ENCODE measurements at regions of chr3 and their contacts with region 1.

Region 1: GRCh38 chr3:132730891-132731580 is 8.8 kb upstream of the NPHP3 start:
- DNase-seq: peak; percentile 46
- H3K4me3 ChIP-seq: no peak overlapping the region; a peak in 1 of 4 replicates
- H3K27ac ChIP-seq: no peak overlapping the region; a peak in 1 of 4 replicates
- H3K4me1 ChIP-seq: no peaks in the 10 kb centered on the region; a peak in 1 of 4 replicates
- H3K27me3 ChIP-seq: no peaks in the 10 kb centered on the region
- CTCF ChIP-seq: peak; percentile 68
- EP300 ChIP-seq: no peak
- RAD21 ChIP-seq: peak; percentile 96

Region 2: GRCh38 chr3:132236701-132237651 is 494.1 kb before region 1 on chr3:
- CTCF ChIA-PET with region 1: no interaction called
- POLR2A ChIA-PET with region 1: no interaction called
- DNase-seq: no peak
- H3K4me3 ChIP-seq: no peak overlapping the region
- H3K27ac ChIP-seq: no peak overlapping the region
- H3K4me1 ChIP-seq: no peaks in the 10 kb centered on the region
- H3K27me3 ChIP-seq: no peaks in the 10 kb centered on the region; the same call in 1 of the 2 replicates
- CTCF ChIP-seq: no peak
- EP300 ChIP-seq: no peak
- RAD21 ChIP-seq: no peak

Region 3: GRCh38 chr3:133264920-133265319 is 533.9 kb after region 1 on chr3:
- CTCF ChIA-PET with region 1: interaction called, 11 read pairs
- POLR2A ChIA-PET with region 1: no interaction called
- DNase-seq: peak; percentile 35
- H3K4me3 ChIP-seq: no peak overlapping the region
- H3K27ac ChIP-seq: peak overlapping the region; percentile 58 to 97; a peak in 3 of 4 replicates
- H3K4me1 ChIP-seq: peaks cover 4 to 53% of the 10 kb centered on the region in 2 experiments; a peak in 2 of 4 replicates
- H3K27me3 ChIP-seq: no peaks in the 10 kb centered on the region
- CTCF ChIP-seq: no peak
- EP300 ChIP-seq: peak; percentile 79 to 92
- RAD21 ChIP-seq: 0 out of 2 replicates have a peak, but pooled peaks have one; percentile 3

Region 4: GRCh38 chr3:133401374-133402135 is 670.5 kb after region 1 on chr3:
- CTCF ChIA-PET with region 1: interaction called, 15 read pairs
- POLR2A ChIA-PET with region 1: no interaction called
- DNase-seq: peak; percentile 77
- H3K4me3 ChIP-seq: no peak overlapping the region
- H3K27ac ChIP-seq: peak overlapping the region in 1 of 2 experiments; percentile 64; a peak in 2 of 4 replicates
- H3K4me1 ChIP-seq: peaks cover 0 to 22% of the 10 kb centered on the region in 2 experiments; a peak in 2 of 4 replicates
- H3K27me3 ChIP-seq: no peaks in the 10 kb centered on the region
- CTCF ChIP-seq: no peak
- EP300 ChIP-seq: no peak
- RAD21 ChIP-seq: no peak

Region 5: GRCh38 chr3:133426721-133427120 is 695.7 kb after region 1 on chr3:
- CTCF ChIA-PET with region 1: interaction called, 55 read pairs
- POLR2A ChIA-PET with region 1: no interaction called
- DNase-seq: no peak
- H3K4me3 ChIP-seq: no peak overlapping the region
- H3K27ac ChIP-seq: no peak overlapping the region
- H3K4me1 ChIP-seq: peaks cover 3 to 12% of the 10 kb centered on the region in 2 experiments; a peak in 2 of 4 replicates
- H3K27me3 ChIP-seq: no peaks in the 10 kb centered on the region
- CTCF ChIP-seq: no peak
- EP300 ChIP-seq: no peak
- RAD21 ChIP-seq: no peak

Region 6: DNA sequence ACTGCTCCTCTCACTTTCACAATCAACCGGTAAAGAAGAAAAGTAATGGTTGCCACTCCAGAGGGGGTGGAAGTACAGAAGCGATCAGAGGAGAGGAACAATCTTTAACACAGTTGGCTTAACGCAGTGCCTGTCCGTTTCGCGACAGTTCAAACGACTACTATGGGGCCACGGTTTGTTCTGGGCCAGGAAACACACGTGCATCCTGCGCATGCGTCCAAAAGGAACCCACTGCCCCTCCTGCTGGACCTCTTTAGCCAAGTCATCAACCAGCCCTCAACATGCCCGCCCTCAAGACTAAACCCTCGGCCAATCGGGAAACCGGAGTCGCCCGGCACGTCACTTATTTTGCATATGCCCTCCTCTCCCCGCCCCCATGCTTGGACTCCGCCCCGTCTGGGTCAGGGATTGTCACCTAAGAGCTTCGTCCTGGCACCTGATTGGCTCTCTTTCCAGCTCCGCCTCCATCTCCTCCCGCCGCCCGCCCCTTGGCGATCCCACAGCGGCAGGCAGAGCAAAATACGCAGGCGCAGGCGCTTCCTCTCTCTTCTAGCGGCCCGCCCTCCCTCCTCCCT is 842.1 kb after region 1 on chr3:
- CTCF ChIA-PET with region 1: interaction called, 20 read pairs
- POLR2A ChIA-PET with region 1: interaction called, 3 read pairs
- DNase-seq: peak; percentile 90
- H3K4me3 ChIP-seq: peak overlapping the region; percentile 60 to 83
- H3K27ac ChIP-seq: peak overlapping the region; percentile 81 to 94
- H3K4me1 ChIP-seq: peaks cover 15 to 43% of the 10 kb centered on the region in 2 experiments
- H3K27me3 ChIP-seq: no peaks in the 10 kb centered on the region
- CTCF ChIP-seq: no peak
- EP300 ChIP-seq: no peak
- RAD21 ChIP-seq: no peak